Motor neuron (in vitro differentiated cells): ENCODE measurements at regions of chr17 and their contacts with region 1.

Region 1: GRCh38 chr17:50269477-50270434 is 4.5 kb upstream of the TMEM92 start:
- ATAC-seq: peak; percentile 15 to 85 (median 37)
- H3K4me3 ChIP-seq: no peak overlapping the region
- H3K27ac ChIP-seq: no peak overlapping the region
- H3K4me1 ChIP-seq: peaks cover 2 to 47% of the 10 kb centered on the region in 2 donors

Region 2: DNA sequence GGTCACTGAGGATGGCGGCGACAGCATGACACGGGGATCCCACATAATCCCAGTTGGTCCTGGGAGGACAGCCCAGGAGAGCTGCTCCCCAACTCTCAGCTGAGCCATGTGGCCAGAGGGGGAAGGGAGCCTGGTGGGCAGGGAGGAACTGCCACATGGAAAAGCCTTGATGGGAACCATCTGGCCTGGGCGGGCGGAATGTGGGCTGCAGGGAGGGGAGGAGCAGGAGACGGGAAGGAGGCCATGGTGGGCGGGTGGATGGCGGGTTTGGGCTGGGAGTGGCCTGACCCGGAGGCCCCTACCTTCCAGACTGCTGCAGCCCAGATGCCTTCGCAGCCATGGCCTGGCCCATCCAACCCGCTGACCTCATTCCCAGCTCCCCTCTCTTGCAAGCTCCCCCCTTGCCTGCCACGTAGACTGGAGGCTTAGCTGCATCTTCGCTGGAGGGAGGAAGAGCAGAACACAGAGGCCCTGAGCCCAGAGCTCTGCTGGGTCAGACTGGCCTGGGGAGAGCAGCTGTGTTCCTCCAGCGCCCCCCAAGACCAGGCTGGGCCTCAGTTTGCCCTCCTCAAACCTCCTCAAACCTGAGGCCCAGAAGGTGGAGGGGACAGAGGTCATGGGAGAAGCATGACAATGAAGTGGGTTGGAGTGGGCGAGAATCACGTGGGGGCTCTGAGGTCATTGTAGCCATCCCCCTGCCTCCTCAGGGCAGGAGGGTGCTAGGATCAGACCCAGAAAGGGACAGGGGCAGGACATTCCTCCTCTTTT is 60.1 kb before region 1 on chr17:
- in situ Hi-C with region 1: loop called in 1 of 9 experiments (anchors 5 kb)
- ATAC-seq: peak; percentile 60 to 94 (median 66)
- H3K4me3 ChIP-seq: no peak overlapping the region
- H3K27ac ChIP-seq: peak overlapping the region; percentile 60 to 84
- H3K4me1 ChIP-seq: peaks cover 33 to 50% of the 10 kb centered on the region in 2 donors